PC-3 (cell line): ENCODE measurements at regions of chr22 and their contacts with region 1.

Region 1: DNA sequence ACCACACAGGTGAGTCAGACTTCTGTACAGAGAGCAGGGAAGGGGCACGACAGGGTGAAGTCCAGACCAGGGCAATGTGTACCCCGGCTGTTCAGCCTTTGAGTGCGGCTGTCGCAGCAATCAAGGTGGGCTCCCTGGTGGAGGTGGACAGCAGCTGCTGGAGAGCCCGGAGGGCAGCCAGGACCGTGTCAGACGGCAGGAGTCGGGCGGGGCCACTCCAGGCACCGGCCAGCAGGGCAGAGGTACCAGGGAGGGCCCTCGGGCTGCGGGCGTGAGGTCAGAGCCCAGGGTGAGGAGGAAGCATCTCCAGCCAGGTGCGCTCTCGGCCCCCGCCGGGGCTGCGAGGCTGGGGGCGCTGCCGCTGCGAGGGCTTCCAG is 802 bp upstream of the PIM3 start:
- DNase-seq: peak; percentile 69
- ATAC-seq: peak; percentile 48
- H3K4me3 ChIP-seq: peak overlapping the region; percentile 71
- H3K27ac ChIP-seq: peak overlapping the region; percentile 75
- H3K4me1 ChIP-seq: peaks cover 26% of the 10 kb centered on the region
- H3K27me3 ChIP-seq: no peaks in the 10 kb centered on the region
- CTCF ChIP-seq: no peak

Region 2: DNA sequence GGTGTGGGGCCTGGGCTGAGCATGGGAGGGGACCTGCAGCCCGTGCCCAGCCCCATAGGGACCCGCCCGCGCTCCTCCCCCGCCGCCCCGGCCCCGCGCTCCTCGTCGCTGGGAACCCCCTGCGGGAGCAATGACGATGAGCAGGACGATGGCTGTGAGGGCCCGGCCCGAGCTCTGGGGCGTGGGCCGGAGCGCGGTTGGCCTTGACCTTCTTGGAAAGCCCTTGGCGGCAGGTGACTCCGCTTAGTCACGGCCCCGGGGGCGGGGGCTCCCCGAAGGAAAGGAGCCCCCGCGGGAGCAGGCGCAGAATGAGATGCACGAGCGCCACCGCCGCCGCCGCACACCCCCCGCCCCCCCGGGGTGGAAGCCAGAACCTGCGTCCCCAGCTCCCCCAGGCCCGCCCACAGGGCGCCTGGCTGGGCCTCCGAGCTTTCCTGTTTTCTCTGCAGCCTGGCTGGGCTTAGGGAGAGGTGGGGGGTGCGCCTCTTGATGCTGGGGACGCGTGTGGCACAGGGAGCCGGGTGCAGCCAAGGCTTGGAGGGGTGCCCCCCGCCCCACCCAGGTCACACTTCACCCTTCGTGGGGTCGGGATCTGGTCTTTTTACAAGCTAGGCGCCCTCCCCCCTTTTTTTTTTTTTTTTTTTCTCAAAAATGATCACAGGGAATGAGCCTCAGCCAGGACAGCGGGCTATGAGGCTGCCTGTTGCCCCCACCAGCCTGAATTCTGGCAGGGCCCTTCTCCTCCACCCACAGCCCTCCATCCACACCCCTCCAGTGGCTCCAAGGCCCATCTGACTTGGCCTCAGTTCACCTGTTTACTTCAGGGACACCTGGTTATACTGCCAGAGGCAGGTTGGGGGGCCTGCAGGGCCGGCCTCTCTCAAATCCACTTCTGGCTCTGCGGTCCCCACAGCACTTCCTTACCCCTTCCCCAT is 23.5 kb before region 1 on chr22:
- CTCF ChIA-PET with region 1: no interaction called
- POLR2A ChIA-PET with region 1: no interaction called
- intact Hi-C with region 1: loop called (anchors 1 kb)
- DNase-seq: peak; percentile 57
- ATAC-seq: peak; percentile 60
- H3K4me3 ChIP-seq: peak overlapping the region; percentile 53
- H3K27ac ChIP-seq: no peak overlapping the region
- H3K4me1 ChIP-seq: peaks cover 15% of the 10 kb centered on the region
- H3K27me3 ChIP-seq: no peaks in the 10 kb centered on the region
- CTCF ChIP-seq: no peak